ENCODE measurements at regions of chr6 and their contacts with region 1.

Region 1: GRCh38 chr6:24245275-24245674 is 112.6 kb downstream of the DCDC2 start:
- DNase-seq: no peak
- ATAC-seq: no peak
- H3K4me3 Mint-ChIP-seq: no peak overlapping the region
- H3K27ac Mint-ChIP-seq: peak overlapping the region; percentile 23; the same call in 1 of the 2 replicates
- H3K4me1 Mint-ChIP-seq: peaks cover 28% of the 10 kb centered on the region
- H3K27me3 Mint-ChIP-seq: no peaks in the 10 kb centered on the region
- CTCF ChIP-seq: no peak

Region 2: GRCh38 chr6:24010133-24010532 is 235.1 kb before region 1 on chr6:
- CTCF ChIA-PET with region 1: no interaction called
- POLR2A ChIA-PET with region 1: interaction called, 11 read pairs
- DNase-seq: no peak
- ATAC-seq: no peak
- H3K4me3 Mint-ChIP-seq: no peak overlapping the region
- H3K27ac Mint-ChIP-seq: no peak overlapping the region
- H3K4me1 Mint-ChIP-seq: no peaks in the 10 kb centered on the region
- H3K27me3 Mint-ChIP-seq: no peaks in the 10 kb centered on the region
- CTCF ChIP-seq: no peak

Region 3: DNA sequence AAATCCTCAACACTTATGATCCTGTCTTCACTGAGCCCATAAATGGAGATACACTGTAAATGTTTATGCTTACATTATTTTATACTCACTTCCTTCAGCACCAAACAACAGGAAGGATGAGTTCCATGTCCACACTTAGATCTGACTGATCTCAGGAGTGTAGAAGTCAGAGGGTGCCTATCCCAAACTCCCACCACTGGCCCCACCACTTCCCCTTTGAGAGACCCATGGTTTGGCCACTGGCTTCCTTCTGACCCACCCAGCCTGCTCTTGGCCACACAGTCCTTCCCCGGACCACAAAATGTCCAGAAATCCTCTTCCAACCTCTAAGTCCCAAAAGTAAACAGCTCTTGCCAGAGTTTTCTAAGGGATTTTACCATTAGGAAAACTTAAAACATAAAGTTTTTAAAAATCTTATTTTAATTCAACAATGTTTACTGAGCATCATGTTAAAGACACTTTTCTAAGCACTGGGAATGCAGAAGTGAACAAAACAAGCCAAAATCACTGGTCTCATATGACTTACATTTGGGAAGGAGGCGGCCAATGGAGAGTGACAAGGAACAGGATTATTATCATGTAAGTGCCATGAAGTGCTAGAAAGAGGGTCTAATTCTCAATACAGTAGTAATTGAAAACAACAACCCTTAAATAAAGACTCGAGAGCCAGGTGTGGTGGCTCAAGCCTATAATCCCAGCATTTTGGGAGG is 15.4 kb before region 1 on chr6:
- CTCF ChIA-PET with region 1: no interaction called
- POLR2A ChIA-PET with region 1: no interaction called
- DNase-seq: no peak
- ATAC-seq: no peak
- H3K4me3 Mint-ChIP-seq: no peak overlapping the region
- H3K27ac Mint-ChIP-seq: no peak overlapping the region
- H3K4me1 Mint-ChIP-seq: peaks cover 27% of the 10 kb centered on the region
- H3K27me3 Mint-ChIP-seq: no peaks in the 10 kb centered on the region
- CTCF ChIP-seq: no peak

Region 4: DNA sequence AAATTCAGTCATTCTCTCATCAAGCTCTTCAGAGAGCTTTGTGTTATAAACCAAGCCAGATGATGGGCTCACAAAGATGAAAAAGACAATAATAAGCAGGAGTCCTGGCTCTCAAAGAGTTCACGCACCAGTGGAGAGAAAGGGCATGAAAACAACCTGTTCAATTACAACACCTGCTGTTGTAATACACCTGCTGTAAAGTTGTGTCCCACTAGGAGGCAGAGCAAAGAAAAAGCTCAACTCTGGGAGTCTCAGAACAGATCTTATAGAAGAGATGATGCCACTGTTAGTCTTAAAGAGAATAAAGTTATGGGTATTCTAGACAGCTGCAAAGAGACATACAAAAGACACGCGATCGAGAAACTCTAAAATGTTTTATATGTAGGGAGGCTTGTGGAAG is 12.0 kb after region 1 on chr6:
- CTCF ChIA-PET with region 1: interaction called, 15 read pairs
- POLR2A ChIA-PET with region 1: no interaction called
- DNase-seq: no peak
- ATAC-seq: peak; percentile 90
- H3K4me3 Mint-ChIP-seq: no peak overlapping the region
- H3K27ac Mint-ChIP-seq: peak overlapping the region; percentile 50; the same call in 1 of the 2 replicates
- H3K4me1 Mint-ChIP-seq: peaks cover 18% of the 10 kb centered on the region
- H3K27me3 Mint-ChIP-seq: peaks cover 2% of the 10 kb centered on the region; the same call in 1 of the 2 replicates
- CTCF ChIP-seq: no peak; the same call in 1 of the 2 replicates

Measured in WTC11 (cell line).